ENCODE measurements at regions of chr1 and their contacts with region 1.

Region 1: DNA sequence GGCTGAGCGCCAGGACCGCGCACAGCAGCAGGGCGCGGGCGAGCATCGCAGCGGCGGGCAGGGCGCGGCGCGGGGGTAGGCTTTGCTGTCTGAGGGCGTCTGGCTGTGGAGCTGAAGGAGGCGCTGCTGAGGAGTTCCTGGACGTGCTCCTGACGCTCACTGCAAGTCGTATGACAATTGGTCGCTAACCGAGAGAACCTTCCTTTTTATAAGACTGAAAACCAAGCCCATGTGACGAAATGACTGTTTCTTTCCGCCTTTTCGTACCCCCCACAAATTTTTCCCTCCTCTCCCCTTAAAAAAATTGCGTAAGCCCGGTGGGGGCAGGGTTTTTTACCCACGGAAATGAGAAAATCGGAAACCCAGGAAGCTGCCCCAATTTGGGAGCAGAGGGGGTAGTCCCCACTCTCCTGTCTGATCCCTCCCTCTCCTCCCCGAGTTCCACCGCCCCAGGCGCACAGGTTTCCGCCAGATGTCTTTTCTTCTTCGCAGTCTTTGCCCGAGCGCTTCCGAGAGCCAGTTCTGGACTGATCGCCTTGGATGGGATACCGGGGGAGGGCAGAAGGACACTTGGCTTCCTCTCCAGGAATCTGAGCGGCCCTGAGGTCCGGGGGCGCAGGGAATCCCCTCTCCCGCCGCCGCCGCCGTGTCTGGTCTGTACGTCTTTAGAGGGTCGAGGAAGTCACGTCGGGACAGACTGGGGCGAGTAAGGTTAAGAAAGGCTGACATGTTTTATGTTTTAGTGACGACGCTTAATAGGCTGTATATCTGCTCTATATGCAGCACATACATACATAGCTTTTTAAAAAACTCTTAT is at the start of gene PTGS2:
- DNase-seq: peak; percentile 71
- H3K4me3 ChIP-seq: peak within 1 kb of the TSS; percentile 46 to 67 (median 58)
- H3K27ac ChIP-seq: peak within 1 kb of the TSS; percentile 84 to 92 (median 88)
- H3K4me1 ChIP-seq: peaks cover 0 to 11% (median 0%) of the 10 kb centered on the region in 4 donors
- H3K27me3 ChIP-seq: peaks cover 18% of the 10 kb centered on the region
- CTCF ChIP-seq: peak in 4 of 5 experiments; percentile 27 to 31 (median 28)
- EP300 ChIP-seq: no peak
- POLR2A ChIP-seq: peak; percentile 68
- total RNA-seq, gene PTGS2: 5.9 to 28.3 (median 8.3) TPM

Region 2: GRCh38 chr1:186482661-186483255 is 197.7 kb before region 1 on chr1:
- in situ Hi-C with region 1: loop called in 1 of 4 experiments (anchors 25 kb)
- intact Hi-C with region 1: no loop called
- DNase-seq: peak; percentile 25
- H3K4me3 ChIP-seq: no peak overlapping the region
- H3K27ac ChIP-seq: no peak overlapping the region
- H3K4me1 ChIP-seq: no peaks in the 10 kb centered on the region
- H3K27me3 ChIP-seq: no peaks in the 10 kb centered on the region
- CTCF ChIP-seq: peak; percentile 54 to 67 (median 63)
- EP300 ChIP-seq: no peak
- POLR2A ChIP-seq: no peak

Region 3: GRCh38 chr1:186559601-186560116 is 120.8 kb before region 1 on chr1:
- in situ Hi-C with region 1: no loop called
- intact Hi-C with region 1: no loop called
- DNase-seq: no peak
- H3K4me3 ChIP-seq: no peak overlapping the region
- H3K27ac ChIP-seq: no peak overlapping the region
- H3K4me1 ChIP-seq: no peaks in the 10 kb centered on the region
- H3K27me3 ChIP-seq: no peaks in the 10 kb centered on the region
- CTCF ChIP-seq: no peak
- EP300 ChIP-seq: no peak
- POLR2A ChIP-seq: no peak